Ovary (tissue), 10 donors: ENCODE measurements at regions of chr11 and their contacts with region 1.

Region 1: GRCh38 chr11:78030429-78031325 is 7.6 kb upstream of the KCTD14 start:
- DNase-seq: peak in 3 of 5 donors; percentile 34 to 47 (median 39)
- H3K4me3 ChIP-seq: no peak overlapping the region
- H3K27ac ChIP-seq: no peak overlapping the region
- H3K4me1 ChIP-seq: peaks cover 4% of the 10 kb centered on the region
- H3K27me3 ChIP-seq: no peaks in the 10 kb centered on the region
- CTCF ChIP-seq: no peak
- EP300 ChIP-seq: no peak
- POLR2A ChIP-seq: no peak

Region 2: GRCh38 chr11:79670882-79671281 is 1640.2 kb after region 1 on chr11:
- intact Hi-C with region 1: loop called in 1 of 4 experiments (anchors 5 kb)
- DNase-seq: no peak
- H3K4me3 ChIP-seq: no peak overlapping the region
- H3K27ac ChIP-seq: no peak overlapping the region
- H3K4me1 ChIP-seq: peaks cover 1% of the 10 kb centered on the region
- H3K27me3 ChIP-seq: no peaks in the 10 kb centered on the region
- CTCF ChIP-seq: no peak
- EP300 ChIP-seq: no peak
- POLR2A ChIP-seq: no peak